Gastrocnemius medialis (tissue), 4 donors: ENCODE measurements at regions of chr15 and their contacts with region 1.

Region 1: GRCh38 chr15:40941528-40942336 is 11.5 kb upstream of the CHAC1 start:
- DNase-seq: peak; percentile 41 to 56
- ATAC-seq: peak; percentile 62 to 68
- H3K4me3 ChIP-seq: peak overlapping the region; percentile 57 to 81 (median 68)
- H3K27ac ChIP-seq: peak overlapping the region; percentile 76 to 85 (median 82)
- H3K4me1 ChIP-seq: peaks cover 25 to 47% of the 10 kb centered on the region in 2 donors
- H3K27me3 ChIP-seq: peaks cover 0 to 4% (median 0%) of the 10 kb centered on the region in 3 donors
- CTCF ChIP-seq: peak in 4 of 5 experiments; percentile 94 to 97 (median 95)
- POLR2A ChIP-seq: peak; percentile 51 to 53

Region 2: GRCh38 chr15:40952901-40953712 is 11.4 kb after region 1 on chr15 and contains the start of gene CHAC1:
- in situ Hi-C with region 1: no loop called
- intact Hi-C with region 1: loop called (anchors 1 kb)
- DNase-seq: peak; percentile 95 to 98
- ATAC-seq: peak; percentile 55 to 57
- H3K4me3 ChIP-seq: peak within 1 kb of the TSS; percentile 76 to 96 (median 87)
- H3K27ac ChIP-seq: peak within 1 kb of the TSS; percentile 91 to 99 (median 96)
- H3K4me1 ChIP-seq: peaks cover 40 to 56% of the 10 kb centered on the region in 2 donors
- H3K27me3 ChIP-seq: no peaks in the 10 kb centered on the region
- CTCF ChIP-seq: peak in 1 of 5 experiments; percentile 13
- POLR2A ChIP-seq: peak; percentile 97 to 99
- total RNA-seq, gene CHAC1: 93.4 to 320 (median 139) TPM

Region 3: DNA sequence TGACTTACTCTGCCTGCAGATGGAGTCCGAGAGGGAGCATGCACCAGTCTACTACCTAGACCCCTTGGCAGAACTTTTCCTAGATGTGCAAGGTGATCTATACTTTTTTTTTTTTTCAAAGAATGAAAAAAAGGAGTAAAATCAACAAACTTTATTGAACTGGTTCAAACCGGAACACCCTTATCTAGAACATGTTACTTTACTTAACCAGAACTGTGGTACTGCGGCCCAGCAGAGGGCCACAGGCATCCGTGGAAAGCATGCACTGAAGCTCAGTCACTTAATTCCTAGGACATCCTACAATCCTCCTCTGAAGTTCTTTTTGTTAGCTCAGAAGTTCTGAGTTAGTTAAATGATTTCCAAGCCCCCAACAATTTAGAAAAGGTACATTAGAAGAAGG is 33.1 kb after region 1 on chr15:
- in situ Hi-C with region 1: no loop called
- intact Hi-C with region 1: loop called (anchors 5 kb)
- DNase-seq: no peak
- ATAC-seq: no peak
- H3K4me3 ChIP-seq: no peak overlapping the region
- H3K27ac ChIP-seq: no peak overlapping the region
- H3K4me1 ChIP-seq: peaks cover 4 to 13% of the 10 kb centered on the region in 2 donors
- H3K27me3 ChIP-seq: no peaks in the 10 kb centered on the region
- CTCF ChIP-seq: no peak
- POLR2A ChIP-seq: no peak

Region 4: GRCh38 chr15:41493205-41493901 is 551.6 kb after region 1 on chr15 and contains the start of gene ITPKA:
- in situ Hi-C with region 1: no loop called
- intact Hi-C with region 1: no loop called
- DNase-seq: peak in 1 of 2 donors; percentile 51
- ATAC-seq: peak; percentile 59 to 65
- H3K4me3 ChIP-seq: peak within 1 kb of the TSS; percentile 58 to 88 (median 64)
- H3K27ac ChIP-seq: peak within 1 kb of the TSS in 2 of 4 donors; percentile 29 to 35
- H3K4me1 ChIP-seq: peaks cover 11 to 21% of the 10 kb centered on the region in 2 donors
- H3K27me3 ChIP-seq: peaks cover 61 to 72% (median 62%) of the 10 kb centered on the region in 3 donors
- CTCF ChIP-seq: no peak
- POLR2A ChIP-seq: peak in 1 of 2 donors; percentile 23
- total RNA-seq, gene ITPKA: 0.75 to 12.4 (median 7.0) TPM